Right ventricle myocardium superior (tissue), 1 donor: ENCODE measurements at regions of chr3 and their contacts with region 1.

Region 1: GRCh38 chr3:43769471-43770425 is 79.0 kb downstream of the ABHD5 start:
- DNase-seq: peak; percentile 99
- ATAC-seq: peak; percentile 86

Region 2: DNA sequence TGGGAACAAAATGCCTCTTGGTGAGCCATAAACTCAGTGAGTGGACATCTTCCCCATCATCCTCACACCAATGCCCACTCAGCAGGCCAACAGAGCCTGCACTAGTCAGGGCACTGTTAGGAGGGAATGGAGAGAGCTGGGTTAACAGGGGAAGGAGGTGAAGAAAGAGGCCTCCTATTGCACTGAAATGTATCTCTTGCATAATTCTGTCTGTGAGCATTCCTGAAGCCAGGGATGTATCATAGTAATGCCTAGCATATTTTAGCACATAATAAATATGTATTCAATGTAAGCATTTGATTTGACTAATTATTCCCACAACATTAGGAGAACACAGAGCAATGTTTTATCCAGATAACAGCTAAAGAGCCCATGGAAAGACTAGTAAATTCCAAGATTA is 229.1 kb before region 1 on chr3:
- intact Hi-C with region 1: loop called (anchors 10 kb)
- DNase-seq: no peak
- ATAC-seq: no peak

Region 3: DNA sequence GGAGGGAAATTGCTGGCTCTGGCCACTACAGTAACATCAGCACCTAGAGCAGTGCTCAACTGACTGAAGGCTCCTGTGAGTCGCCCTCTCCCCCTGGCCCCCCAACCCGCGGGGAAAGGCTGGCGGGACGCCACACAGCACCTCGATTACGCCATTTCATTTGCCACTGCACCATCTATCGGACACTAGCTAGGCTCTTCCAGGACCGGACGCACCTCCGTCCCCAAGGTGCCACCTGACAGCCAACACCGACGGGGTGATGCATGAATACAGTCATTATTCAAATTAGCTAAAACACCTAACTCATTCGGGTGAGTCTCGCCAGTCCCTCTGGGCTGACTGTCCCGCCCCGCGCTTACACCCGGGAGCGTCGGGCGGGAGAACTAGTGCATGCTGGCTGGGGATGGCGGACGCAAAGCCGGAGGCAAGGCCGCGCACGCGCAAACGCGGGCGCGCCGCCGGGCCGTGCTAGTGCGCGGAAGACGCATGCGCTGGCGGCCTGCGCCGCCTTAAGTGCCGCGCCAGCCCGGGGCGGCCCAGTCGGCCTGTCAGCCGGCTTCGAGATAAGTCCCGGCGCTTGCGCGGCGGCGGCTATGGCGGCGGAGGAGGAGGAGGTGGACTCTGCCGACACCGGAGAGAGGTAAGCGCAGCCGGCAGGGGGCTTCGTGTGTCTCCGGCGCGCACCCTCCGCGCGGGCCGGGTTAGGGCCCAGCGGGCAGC is 79.2 kb before region 1 on chr3 and contains the start of gene ABHD5:
- intact Hi-C with region 1: loop called (anchors 5 kb)
- DNase-seq: peak; percentile 96
- ATAC-seq: peak; percentile 98
- total RNA-seq, gene ABHD5: 24.9 TPM

Region 4: GRCh38 chr3:43894176-43895049 is 124.7 kb after region 1 on chr3:
- intact Hi-C with region 1: no loop called
- DNase-seq: peak; percentile 73
- ATAC-seq: peak; percentile 93

Region 5: GRCh38 chr3:43996379-43997301 is 226.9 kb after region 1 on chr3:
- intact Hi-C with region 1: no loop called
- DNase-seq: no peak
- ATAC-seq: peak; percentile 48